Naive thymus-derived CD8-positive, alpha-beta T cell (primary cell): ENCODE measurements at regions of chr5 and their contacts with region 1.

Region 1: GRCh38 chr5:157142317-157143126 is at the start of gene MED7:
- DNase-seq: peak; percentile 71 to 98 (median 93)
- ATAC-seq: peak; percentile 95 to 96
- H3K4me3 Mint-ChIP-seq: peak within 1 kb of the TSS; percentile 92 to 99 (median 96)
- H3K27ac Mint-ChIP-seq: peak within 1 kb of the TSS; percentile 93 to 100 (median 97)
- H3K4me1 Mint-ChIP-seq: peaks cover 16 to 38% (median 35%) of the 10 kb centered on the region in 4 donors
- H3K27me3 Mint-ChIP-seq: no peaks in the 10 kb centered on the region
- polyA plus RNA-seq, gene MED7: 12.0 to 18.2 (median 15.0) TPM

Region 2: DNA sequence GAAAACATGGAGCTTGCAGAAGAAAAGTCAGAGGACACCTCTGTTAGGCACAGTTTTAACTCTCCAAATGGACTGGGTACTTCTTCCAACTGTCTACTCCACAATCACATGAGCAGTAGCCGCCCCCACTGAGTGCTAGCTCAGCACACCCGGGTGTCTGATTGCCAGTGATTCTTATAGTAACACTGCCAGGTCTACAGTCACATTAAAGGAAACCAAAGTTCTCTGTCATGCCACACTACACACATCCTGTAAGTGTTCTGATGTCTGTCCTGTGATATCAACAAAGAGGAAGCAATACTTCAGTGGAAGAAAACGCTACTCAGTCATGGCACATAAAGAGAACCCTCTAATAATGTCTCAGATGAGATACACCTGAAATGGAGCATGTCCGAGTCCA is 33.5 kb before region 1 on chr5 and contains the start of gene HAVCR2:
- POLR2A ChIA-PET with region 1: interaction called, 17 read pairs
- DNase-seq: peak in 9 of 10 donors; percentile 10 to 72 (median 45)
- ATAC-seq: peak; percentile 95 to 97
- H3K4me3 Mint-ChIP-seq: peak within 1 kb of the TSS; percentile 68 to 89 (median 84)
- H3K27ac Mint-ChIP-seq: peak within 1 kb of the TSS; percentile 78 to 96 (median 92)
- H3K4me1 Mint-ChIP-seq: peaks cover 18 to 59% (median 42%) of the 10 kb centered on the region in 4 donors
- H3K27me3 Mint-ChIP-seq: no peaks in the 10 kb centered on the region
- polyA plus RNA-seq, gene HAVCR2: 4.4 to 8.9 (median 5.4) TPM

Region 3: DNA sequence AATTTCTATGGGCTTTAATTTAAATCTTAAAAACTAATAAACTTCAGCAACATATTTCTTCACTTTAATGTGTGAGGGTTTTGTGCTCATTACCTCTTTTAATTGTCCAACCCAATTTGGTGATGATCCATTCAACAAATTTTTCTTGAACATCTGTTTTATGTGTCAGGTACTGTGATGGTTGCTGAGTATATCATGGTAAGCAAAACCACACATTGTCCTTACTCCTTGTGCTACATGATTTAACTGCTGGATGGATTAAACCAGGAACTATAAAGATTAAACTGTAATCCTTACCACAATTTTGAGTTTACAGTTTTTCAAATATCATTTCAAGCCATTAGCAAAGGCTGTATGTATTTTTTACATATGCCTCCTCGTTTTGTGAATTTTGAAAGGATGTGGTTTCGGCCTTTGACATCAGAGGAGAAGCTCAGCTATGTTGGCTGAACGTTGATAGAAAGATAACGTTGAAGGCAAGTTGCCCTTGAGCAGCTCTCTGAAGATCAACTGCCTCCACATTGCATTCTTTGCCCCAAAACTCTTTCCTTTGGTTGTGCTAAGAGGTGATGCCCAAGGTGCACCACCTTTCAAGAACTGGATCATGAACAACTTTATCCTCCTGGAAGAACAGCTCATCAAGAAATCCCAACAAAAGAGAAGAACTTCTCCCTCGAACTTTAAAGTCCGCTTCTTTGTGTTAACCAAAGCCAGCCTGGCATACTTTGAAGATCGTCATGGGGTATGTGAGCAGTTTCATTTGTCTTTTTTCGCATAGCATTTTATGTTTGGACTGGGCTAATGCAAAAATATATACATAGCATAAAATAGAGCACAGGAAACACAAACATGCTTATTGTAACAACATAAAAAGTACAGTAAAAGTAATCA is 38.1 kb after region 1 on chr5 and contains the start of gene ITK:
- POLR2A ChIA-PET with region 1: interaction called, 20 read pairs
- DNase-seq: peak in 8 of 10 donors; percentile 38 to 83 (median 70)
- ATAC-seq: peak; percentile 81 to 90
- H3K4me3 Mint-ChIP-seq: peak within 1 kb of the TSS; percentile 80 to 100 (median 98)
- H3K27ac Mint-ChIP-seq: peak within 1 kb of the TSS; percentile 92 to 100 (median 96)
- H3K4me1 Mint-ChIP-seq: peaks cover 28 to 56% (median 52%) of the 10 kb centered on the region in 4 donors
- H3K27me3 Mint-ChIP-seq: no peaks in the 10 kb centered on the region
- polyA plus RNA-seq, gene ITK: 109 to 231 (median 148) TPM

Region 4: DNA sequence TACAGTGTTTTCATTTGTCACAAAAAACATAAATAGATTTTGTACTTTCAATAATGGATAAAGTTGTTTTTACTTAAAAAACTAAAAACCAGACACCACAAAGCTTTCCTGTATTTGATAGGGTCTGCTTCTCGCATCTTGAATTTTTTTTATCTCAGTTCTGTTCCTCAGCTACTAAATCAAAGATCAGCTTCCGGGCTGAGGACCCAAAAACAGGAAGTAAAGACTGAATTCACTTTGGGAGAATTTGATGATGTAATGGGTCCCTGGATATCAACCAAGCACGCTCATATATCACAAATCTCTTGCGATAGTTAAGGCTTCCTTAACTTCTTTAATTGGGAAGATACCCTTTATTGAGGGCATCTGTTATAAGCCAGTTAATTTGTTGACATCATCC is 62.2 kb after region 1 on chr5:
- POLR2A ChIA-PET with region 1: interaction called, 22 read pairs
- DNase-seq: peak in 4 of 10 donors; percentile 41 to 74 (median 58)
- ATAC-seq: peak; percentile 61 to 76
- H3K4me3 Mint-ChIP-seq: peak overlapping the region; percentile 62 to 82 (median 68)
- H3K27ac Mint-ChIP-seq: peak overlapping the region; percentile 86 to 98 (median 93)
- H3K4me1 Mint-ChIP-seq: peaks cover 37 to 92% (median 83%) of the 10 kb centered on the region in 4 donors
- H3K27me3 Mint-ChIP-seq: no peaks in the 10 kb centered on the region

Region 5: GRCh38 chr5:157253547-157253946 is 111.0 kb after region 1 on chr5:
- POLR2A ChIA-PET with region 1: interaction called, 11 read pairs
- DNase-seq: peak in 1 of 10 donors; percentile 15
- ATAC-seq: no peak
- H3K4me3 Mint-ChIP-seq: peak overlapping the region; percentile 40 to 83 (median 72)
- H3K27ac Mint-ChIP-seq: peak overlapping the region; percentile 89 to 97 (median 92)
- H3K4me1 Mint-ChIP-seq: peaks cover 43 to 97% (median 94%) of the 10 kb centered on the region in 4 donors
- H3K27me3 Mint-ChIP-seq: no peaks in the 10 kb centered on the region

Region 6: DNA sequence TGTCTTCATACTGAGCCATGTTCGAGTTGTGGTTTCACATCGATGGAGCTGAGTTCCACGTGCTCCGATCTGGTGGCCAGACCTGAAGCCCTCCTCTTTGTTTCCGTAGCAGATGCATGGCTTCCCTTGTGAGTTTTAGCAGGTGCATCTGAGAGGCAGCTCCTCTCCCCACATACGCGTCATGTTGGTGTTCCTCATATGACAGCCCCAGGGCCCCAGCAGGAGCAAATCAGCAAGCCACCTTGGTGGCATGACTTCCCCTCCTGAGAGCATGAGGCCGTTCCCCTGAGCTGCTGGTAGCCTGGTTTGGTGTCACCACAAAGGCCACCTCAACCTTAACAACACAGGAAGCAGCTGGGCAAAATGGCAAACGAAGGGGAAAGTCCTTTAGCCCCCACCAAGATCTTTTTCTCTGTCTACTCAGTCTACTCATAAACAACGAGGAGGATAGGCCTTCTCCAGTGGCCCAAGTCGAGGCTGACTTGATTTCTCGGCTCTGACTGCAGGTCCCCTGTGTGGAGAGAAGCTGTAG is 129.3 kb after region 1 on chr5:
- POLR2A ChIA-PET with region 1: interaction called, 21 read pairs
- DNase-seq: peak; percentile 59 to 96 (median 92)
- ATAC-seq: peak; percentile 88 to 94
- H3K4me3 Mint-ChIP-seq: peak overlapping the region; percentile 76 to 96 (median 86)
- H3K27ac Mint-ChIP-seq: peak overlapping the region; percentile 93 to 100 (median 98)
- H3K4me1 Mint-ChIP-seq: peaks cover 48 to 96% (median 89%) of the 10 kb centered on the region in 4 donors
- H3K27me3 Mint-ChIP-seq: peaks cover 0 to 1% (median 0%) of the 10 kb centered on the region in 5 donors